ENCODE measurements at regions of chr17 and their contacts with region 1.

Region 1: DNA sequence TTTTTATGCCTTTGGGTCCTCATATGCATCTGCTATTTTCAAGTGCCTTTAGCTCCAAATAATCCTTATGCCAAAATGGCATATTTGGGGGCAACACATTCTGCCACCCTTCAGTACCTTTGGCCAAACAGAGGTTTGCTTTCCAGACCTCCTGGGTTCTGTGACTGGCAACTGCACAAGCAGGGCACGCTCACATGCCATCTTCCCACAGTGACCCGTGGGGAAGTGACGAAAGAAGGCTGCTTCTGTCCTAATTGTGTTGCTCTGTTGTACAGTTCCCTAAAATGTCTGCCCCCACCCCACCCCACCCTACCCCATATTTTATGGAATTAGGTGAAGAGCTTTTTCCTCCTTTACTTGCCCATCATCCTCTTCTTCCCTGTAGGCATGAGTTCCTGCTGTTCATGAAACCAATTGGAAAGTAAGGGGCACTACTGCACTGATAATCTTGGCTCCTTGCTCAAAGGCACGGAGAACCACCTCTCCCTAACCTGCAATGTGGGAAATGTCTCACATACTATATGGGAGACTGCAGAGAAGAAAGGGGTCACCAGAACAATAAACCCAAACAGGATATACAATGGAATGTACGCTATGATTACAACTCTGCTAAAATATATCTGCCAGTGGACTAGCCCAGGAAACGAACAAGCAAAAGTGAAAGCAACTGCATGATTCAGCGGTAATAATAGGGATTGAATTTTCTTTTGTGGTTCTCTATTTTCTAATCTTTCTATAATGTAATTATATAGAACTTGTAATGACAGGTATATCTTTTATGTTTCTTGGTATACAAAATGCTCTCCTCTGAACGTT is 3.3 kb upstream of the SLFN12L start:
- DNase-seq: no peak
- ATAC-seq: peak; percentile 57
- H3K4me3 ChIP-seq: peak overlapping the region; percentile 84
- H3K27ac ChIP-seq: peak overlapping the region; percentile 92
- H3K4me1 ChIP-seq: peaks cover 19% of the 10 kb centered on the region
- H3K27me3 ChIP-seq: no peaks in the 10 kb centered on the region
- CTCF ChIP-seq: no peak
- EP300 ChIP-seq: no peak
- POLR2A ChIP-seq: peak; percentile 72
- RAD21 ChIP-seq: no peak

Region 2: DNA sequence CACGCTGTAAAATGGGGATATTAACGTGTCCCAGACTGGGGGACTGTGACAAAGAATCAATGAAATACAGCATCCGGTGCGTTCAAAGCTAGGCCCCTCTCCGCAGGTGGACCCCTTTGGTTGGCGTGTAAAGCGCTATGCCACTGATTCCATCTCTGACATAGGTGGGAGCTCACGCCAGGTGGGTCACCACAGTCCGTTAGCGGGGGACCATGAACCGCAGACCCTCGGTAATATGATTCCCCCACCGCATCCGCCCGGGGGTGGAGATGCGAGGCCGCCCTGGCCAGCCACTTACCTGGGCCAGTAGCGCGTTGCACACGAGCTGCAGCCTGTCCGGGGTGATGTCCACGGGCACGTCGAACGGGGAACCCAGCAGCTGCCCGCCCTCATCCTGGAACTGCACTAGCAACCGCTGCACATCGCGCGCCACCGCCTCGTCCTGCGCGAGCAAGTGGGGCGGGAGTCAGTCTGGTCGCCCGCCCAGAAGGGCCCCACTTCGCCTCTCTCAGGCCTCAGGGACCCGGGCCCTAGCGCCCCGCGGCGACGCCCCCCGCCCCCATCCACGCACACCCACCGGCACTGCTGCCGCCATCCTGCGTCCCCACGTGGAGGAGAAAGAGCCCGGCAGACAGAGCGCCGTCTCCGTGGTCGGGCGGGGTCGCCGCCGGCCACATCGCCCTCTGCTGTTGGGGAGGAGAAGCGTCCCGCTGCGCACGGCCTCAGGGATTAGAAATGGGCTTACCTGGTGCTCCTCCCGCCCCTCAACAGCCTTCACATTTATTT is 398.9 kb before region 1 on chr17 and contains the start of gene NLE1:
- CTCF ChIA-PET with region 1: interaction called, 3 read pairs
- POLR2A ChIA-PET with region 1: no interaction called
- RAD21 ChIA-PET with region 1: interaction called, 3 read pairs
- SMC1A ChIA-PET with region 1: interaction called, 3 read pairs
- in situ Hi-C with region 1: no loop called
- intact Hi-C with region 1: loop called (anchors 10 kb)
- DNase-seq: peak; percentile 36
- ATAC-seq: peak; percentile 95
- H3K4me3 ChIP-seq: peak within 1 kb of the TSS; percentile 98
- H3K27ac ChIP-seq: peak within 1 kb of the TSS; percentile 86
- H3K4me1 ChIP-seq: no peaks in the 10 kb centered on the region
- H3K27me3 ChIP-seq: no peaks in the 10 kb centered on the region
- CTCF ChIP-seq: peak; percentile 87 to 97 (median 92)
- EP300 ChIP-seq: no peak
- POLR2A ChIP-seq: peak; percentile 90
- RAD21 ChIP-seq: 0 out of 2 replicates have a peak, but pooled peaks have one; percentile 15
- polyA plus RNA-seq, gene NLE1: 2.4 to 5.5 TPM

Region 3: DNA sequence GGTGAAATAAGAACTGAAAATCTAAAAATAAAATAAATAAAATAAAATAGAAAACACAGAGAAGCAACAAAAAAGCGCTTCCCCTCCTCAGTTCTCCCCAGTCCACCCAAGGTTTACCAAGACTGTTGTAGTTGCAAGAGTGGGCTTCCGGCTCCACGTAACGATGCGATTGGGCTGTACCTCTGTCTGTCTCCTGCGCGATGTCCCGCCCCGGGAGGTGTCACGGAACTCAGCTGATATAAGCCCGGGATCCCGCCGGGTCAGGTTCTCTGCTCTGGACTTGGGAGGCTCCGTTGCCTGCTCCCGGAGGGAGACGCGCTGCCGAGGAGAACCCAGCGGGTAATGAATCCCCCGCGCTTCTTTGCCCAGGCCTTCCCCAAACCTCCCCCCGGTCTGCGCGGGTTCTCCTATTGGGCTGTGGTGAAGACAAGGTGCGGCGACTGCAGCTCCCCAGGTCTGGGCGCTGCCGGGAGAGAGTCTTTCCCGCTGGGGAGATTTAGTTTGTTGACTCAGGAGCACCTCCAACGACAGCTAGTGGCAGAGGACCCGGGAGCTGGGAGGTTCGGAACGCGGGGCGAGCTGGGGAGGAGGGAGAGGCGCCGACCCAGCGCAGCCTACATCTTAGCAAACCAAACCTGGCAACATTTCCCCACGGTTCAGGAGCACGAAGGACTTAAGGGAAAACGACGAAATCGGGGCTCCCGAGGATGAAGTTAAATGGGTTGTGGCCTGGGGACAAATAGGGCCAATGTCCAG is 297.8 kb before region 1 on chr17 and contains the start of gene SLFN5:
- CTCF ChIA-PET with region 1: interaction called, 4 read pairs
- POLR2A ChIA-PET with region 1: no interaction called
- RAD21 ChIA-PET with region 1: no interaction called
- SMC1A ChIA-PET with region 1: interaction called, 6 read pairs
- in situ Hi-C with region 1: no loop called
- intact Hi-C with region 1: loop called (anchors 2 kb)
- DNase-seq: peak; percentile 73
- ATAC-seq: peak; percentile 97
- H3K4me3 ChIP-seq: peak within 1 kb of the TSS; percentile 98
- H3K27ac ChIP-seq: peak within 1 kb of the TSS; percentile 36
- H3K4me1 ChIP-seq: peaks cover 13% of the 10 kb centered on the region; the same call in 1 of the 2 replicates
- H3K27me3 ChIP-seq: no peaks in the 10 kb centered on the region
- CTCF ChIP-seq: no peak
- EP300 ChIP-seq: no peak
- POLR2A ChIP-seq: peak; percentile 76
- RAD21 ChIP-seq: no peak
- polyA plus RNA-seq, gene SLFN5: 0.19 to 0.58 TPM

Region 4: DNA sequence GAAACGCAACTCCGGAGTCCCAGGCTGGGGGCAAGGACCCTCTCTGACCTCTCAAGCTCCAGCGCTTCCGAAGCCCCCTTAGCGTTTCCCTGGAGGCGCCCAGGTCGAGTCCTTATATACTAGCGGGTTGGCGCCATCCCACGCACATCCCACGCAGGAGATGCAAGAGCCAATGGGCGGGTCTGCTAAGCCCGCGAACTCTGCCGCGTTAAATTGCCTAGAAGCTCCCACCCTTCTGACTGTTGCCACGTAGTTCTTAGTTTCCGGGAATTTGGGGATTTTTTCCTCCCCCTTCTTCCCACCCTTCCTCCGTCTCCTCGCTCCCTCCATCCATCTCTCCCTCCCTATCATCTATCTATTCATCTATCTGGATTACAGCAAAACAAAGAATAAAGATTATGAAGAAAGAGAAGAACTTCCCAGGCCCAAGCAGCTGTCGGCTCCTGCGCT is 167.2 kb before region 1 on chr17 and contains the start of gene SLFN11:
- CTCF ChIA-PET with region 1: interaction called, 10 read pairs
- POLR2A ChIA-PET with region 1: interaction called, 5 read pairs
- RAD21 ChIA-PET with region 1: interaction called, 19 read pairs
- SMC1A ChIA-PET with region 1: interaction called, 6 read pairs
- in situ Hi-C with region 1: loop called (anchors 5 kb)
- intact Hi-C with region 1: no loop called
- DNase-seq: peak; percentile 30
- ATAC-seq: peak; percentile 80
- H3K4me3 ChIP-seq: peak within 1 kb of the TSS; percentile 70
- H3K27ac ChIP-seq: no peak within 1 kb of the TSS; the same call in 1 of the 2 replicates
- H3K4me1 ChIP-seq: peaks cover 3% of the 10 kb centered on the region
- H3K27me3 ChIP-seq: peaks cover 0 to 9% of the 10 kb centered on the region in 2 experiments; a peak in 3 of 4 replicates
- CTCF ChIP-seq: no peak
- EP300 ChIP-seq: no peak
- POLR2A ChIP-seq: peak; percentile 91
- RAD21 ChIP-seq: no peak
- polyA plus RNA-seq, gene SLFN11: 7.9 to 8.0 TPM

Region 5: DNA sequence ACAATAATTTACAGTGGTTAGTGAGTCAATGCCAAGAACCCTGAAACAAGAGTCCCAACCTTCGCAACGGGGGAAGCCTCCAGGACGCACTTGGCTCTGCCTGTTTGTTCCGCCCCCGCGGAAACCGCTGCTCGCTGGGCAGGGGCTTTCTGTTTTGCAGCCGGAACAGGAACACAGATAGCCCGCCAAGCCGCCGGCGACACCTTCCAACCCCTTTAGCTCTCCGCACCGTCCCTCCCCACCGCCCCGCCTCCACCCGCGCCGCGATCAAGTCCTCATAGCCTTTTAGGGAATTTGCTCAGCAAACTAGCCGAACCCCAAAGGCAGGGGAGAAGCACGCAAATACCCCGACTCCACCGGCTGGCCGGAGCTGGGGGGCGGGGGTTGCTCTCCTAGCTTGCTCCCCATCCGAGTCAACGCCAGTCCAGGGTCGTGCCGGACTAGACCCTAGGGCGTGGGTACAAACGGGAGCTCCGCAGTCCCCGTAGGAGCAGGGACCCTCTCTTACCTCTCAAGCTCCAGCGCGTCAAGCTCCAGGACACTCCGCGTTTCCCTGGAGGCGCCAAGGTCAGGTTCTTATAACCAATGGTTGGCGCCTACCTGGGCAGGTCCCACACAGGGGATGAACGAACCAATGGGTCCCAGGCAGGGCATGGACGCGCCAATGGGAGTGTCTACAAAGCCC is 92.4 kb before region 1 on chr17 and contains the start of gene SLFN13:
- CTCF ChIA-PET with region 1: interaction called, 8 read pairs
- POLR2A ChIA-PET with region 1: interaction called, 9 read pairs
- RAD21 ChIA-PET with region 1: interaction called, 28 read pairs
- SMC1A ChIA-PET with region 1: interaction called, 26 read pairs
- in situ Hi-C with region 1: no loop called
- intact Hi-C with region 1: loop called (anchors 2 kb)
- DNase-seq: peak; percentile 78
- ATAC-seq: peak; percentile 90
- H3K4me3 ChIP-seq: peak within 1 kb of the TSS; percentile 81
- H3K27ac ChIP-seq: peak within 1 kb of the TSS; percentile 99
- H3K4me1 ChIP-seq: peaks cover 3% of the 10 kb centered on the region
- H3K27me3 ChIP-seq: no peaks in the 10 kb centered on the region
- CTCF ChIP-seq: no peak
- EP300 ChIP-seq: peak; percentile 28 to 71; a peak in 2 of 4 replicates
- POLR2A ChIP-seq: peak; percentile 83
- RAD21 ChIP-seq: no peak
- polyA plus RNA-seq, gene SLFN13: 12.4 to 20.2 TPM

Region 6: GRCh38 chr17:35578197-35578928 is 37.6 kb after region 1 on chr17 and contains the start of gene PEX12:
- CTCF ChIA-PET with region 1: interaction called, 17 read pairs
- POLR2A ChIA-PET with region 1: interaction called, 5 read pairs
- RAD21 ChIA-PET with region 1: interaction called, 35 read pairs
- SMC1A ChIA-PET with region 1: interaction called, 19 read pairs
- in situ Hi-C with region 1: no loop called
- intact Hi-C with region 1: no loop called
- DNase-seq: peak; percentile 58
- ATAC-seq: peak; percentile 94
- H3K4me3 ChIP-seq: peak within 1 kb of the TSS; percentile 83
- H3K27ac ChIP-seq: peak within 1 kb of the TSS; percentile 93
- H3K4me1 ChIP-seq: peaks cover 11% of the 10 kb centered on the region
- H3K27me3 ChIP-seq: no peaks in the 10 kb centered on the region
- CTCF ChIP-seq: no peak
- EP300 ChIP-seq: no peak
- POLR2A ChIP-seq: peak; percentile 90
- RAD21 ChIP-seq: no peak
- polyA plus RNA-seq, gene PEX12: 2.9 TPM

Region 7: GRCh38 chr17:35808962-35809854 is 268.4 kb after region 1 on chr17 and contains the start of gene TAF15:
- CTCF ChIA-PET with region 1: interaction called, 5 read pairs
- POLR2A ChIA-PET with region 1: interaction called, 10 read pairs
- RAD21 ChIA-PET with region 1: interaction called, 5 read pairs
- SMC1A ChIA-PET with region 1: no interaction called
- in situ Hi-C with region 1: no loop called
- intact Hi-C with region 1: no loop called
- DNase-seq: peak; percentile 97
- ATAC-seq: peak; percentile 96
- H3K4me3 ChIP-seq: peak within 1 kb of the TSS; percentile 80
- H3K27ac ChIP-seq: peak within 1 kb of the TSS; percentile 94
- H3K4me1 ChIP-seq: peaks cover 4% of the 10 kb centered on the region
- H3K27me3 ChIP-seq: no peaks in the 10 kb centered on the region
- CTCF ChIP-seq: peak; percentile 81 to 91 (median 89)
- EP300 ChIP-seq: peak in 1 of 2 experiments; percentile 40; a peak in 1 of 4 replicates
- POLR2A ChIP-seq: peak; percentile 97
- RAD21 ChIP-seq: peak; percentile 34
- polyA plus RNA-seq, gene TAF15: 9.5 to 17.1 TPM